K562 (cell line): ENCODE measurements at regions of chr1 and their contacts with region 1.

Region 1: GRCh38 chr1:204670152-204670927 is 15.2 kb downstream of the LRRN2 start:
- DNase-seq: peak; percentile 61 to 76 (median 71)
- ATAC-seq: no peak
- H3K4me3 ChIP-seq: no peak overlapping the region
- H3K27ac ChIP-seq: no peak overlapping the region; the same call in 2 of the 3 replicates
- H3K4me1 ChIP-seq: peaks cover 34 to 42% of the 10 kb centered on the region in 2 experiments
- H3K27me3 ChIP-seq: peaks cover 0 to 12% of the 10 kb centered on the region in 2 experiments; a peak in 3 of 5 replicates
- CTCF ChIP-seq: no peak
- EP300 ChIP-seq: no peak
- POLR2A ChIP-seq: no peak
- RAD21 ChIP-seq: no peak

Region 2: GRCh38 chr1:204565617-204566582 is 104.4 kb before region 1 on chr1:
- CTCF ChIA-PET with region 1: no interaction called
- POLR2A ChIA-PET with region 1: interaction called, 3 read pairs
- in situ Hi-C with region 1: no loop called
- intact Hi-C with region 1: loop called (anchors 5 kb)
- DNase-seq: peak; percentile 84 to 92 (median 90)
- ATAC-seq: peak; percentile 92
- H3K4me3 ChIP-seq: no peak overlapping the region
- H3K27ac ChIP-seq: peak overlapping the region; percentile 4; the same call in 1 of the 3 replicates
- H3K4me1 ChIP-seq: peaks cover 12 to 16% of the 10 kb centered on the region in 2 experiments; a peak in 4 of 5 replicates
- H3K27me3 ChIP-seq: no peaks in the 10 kb centered on the region
- CTCF ChIP-seq: peak; percentile 81 to 91 (median 90)
- EP300 ChIP-seq: peak; percentile 95
- POLR2A ChIP-seq: no peak
- RAD21 ChIP-seq: peak; percentile 94 to 98

Region 3: DNA sequence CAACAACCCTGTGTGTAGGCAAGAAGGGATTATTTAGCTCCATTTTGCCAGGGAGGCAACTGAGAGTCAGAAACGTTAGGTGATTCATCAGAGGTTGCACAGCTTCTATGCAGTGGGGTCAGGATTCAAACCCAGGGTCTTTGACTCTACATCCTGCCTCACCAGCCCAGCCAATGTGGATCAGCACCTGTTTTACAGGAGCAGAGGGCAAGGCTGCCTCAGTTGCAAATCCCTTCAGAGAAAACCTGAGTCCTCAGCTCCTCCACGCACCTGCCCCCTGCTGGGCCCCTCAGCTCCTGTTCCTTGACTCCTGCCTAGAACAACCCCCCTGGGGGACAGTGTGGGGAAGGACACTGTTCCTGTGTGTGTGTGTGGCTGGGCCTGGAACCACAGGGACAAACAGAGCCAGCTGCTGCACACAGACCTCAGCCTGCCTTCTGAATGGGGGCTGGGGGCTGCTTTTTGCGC is 46.4 kb before region 1 on chr1:
- CTCF ChIA-PET with region 1: no interaction called
- POLR2A ChIA-PET with region 1: interaction called, 3 read pairs
- in situ Hi-C with region 1: no loop called
- intact Hi-C with region 1: loop called (anchors 5 kb)
- DNase-seq: peak; percentile 71 to 88 (median 76)
- ATAC-seq: peak; percentile 89
- H3K4me3 ChIP-seq: no peak overlapping the region
- H3K27ac ChIP-seq: no peak overlapping the region
- H3K4me1 ChIP-seq: peaks cover 37 to 40% of the 10 kb centered on the region in 2 experiments
- H3K27me3 ChIP-seq: peaks cover 10 to 25% of the 10 kb centered on the region in 2 experiments
- CTCF ChIP-seq: peak; percentile 85 to 99 (median 87)
- EP300 ChIP-seq: no peak
- POLR2A ChIP-seq: no peak
- RAD21 ChIP-seq: peak in 1 of 2 experiments; percentile 45; a peak in 2 of 4 replicates

Region 4: GRCh38 chr1:204685236-204686006 is 15.1 kb after region 1 on chr1 and contains the start of gene LRRN2:
- CTCF ChIA-PET with region 1: no interaction called
- POLR2A ChIA-PET with region 1: interaction called, 23 read pairs
- in situ Hi-C with region 1: no loop called
- intact Hi-C with region 1: no loop called
- DNase-seq: no peak
- ATAC-seq: no peak
- H3K4me3 ChIP-seq: no peak within 1 kb of the TSS
- H3K27ac ChIP-seq: no peak within 1 kb of the TSS
- H3K4me1 ChIP-seq: peaks cover 8 to 16% of the 10 kb centered on the region in 2 experiments; a peak in 4 of 5 replicates
- H3K27me3 ChIP-seq: no peaks in the 10 kb centered on the region
- CTCF ChIP-seq: no peak
- EP300 ChIP-seq: no peak
- POLR2A ChIP-seq: no peak
- RAD21 ChIP-seq: no peak
- polyA plus RNA-seq, gene LRRN2: not detected

Region 5: DNA sequence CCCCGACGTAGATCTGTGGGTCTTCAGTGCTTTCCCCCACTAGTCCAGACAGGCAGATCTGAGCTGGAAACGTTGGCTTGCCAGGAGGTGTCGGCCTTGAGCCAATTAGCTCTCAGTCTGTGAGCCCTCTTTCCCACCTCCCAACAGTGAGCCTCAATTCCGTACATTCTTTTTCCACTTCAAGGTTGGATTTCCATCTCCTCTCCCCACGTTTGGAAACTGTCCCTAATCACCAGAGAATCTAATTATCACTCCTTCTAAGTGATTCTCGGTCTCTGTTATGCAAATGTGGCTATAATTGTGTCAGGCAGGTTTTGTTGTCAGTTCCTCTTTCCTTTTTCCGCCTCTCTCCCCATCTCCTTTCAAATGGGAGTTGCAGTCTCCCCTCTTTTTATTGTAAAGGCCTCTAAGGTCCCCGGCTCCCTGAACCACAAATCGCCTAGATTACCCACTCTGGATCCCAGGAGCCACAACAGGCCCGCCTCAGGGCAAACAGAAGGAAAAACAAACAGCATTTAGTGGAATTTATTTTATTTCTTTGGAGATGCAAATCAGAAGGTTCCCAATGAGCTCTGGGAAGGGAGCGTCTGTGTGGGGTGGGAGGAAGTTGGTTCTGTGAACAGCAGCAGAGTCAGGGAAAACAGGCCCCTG is 44.6 kb after region 1 on chr1:
- CTCF ChIA-PET with region 1: no interaction called
- POLR2A ChIA-PET with region 1: interaction called, 3 read pairs
- in situ Hi-C with region 1: no loop called
- intact Hi-C with region 1: loop called (anchors 1 kb)
- DNase-seq: peak in 1 of 4 experiments; percentile 38
- ATAC-seq: peak; percentile 39; the same call in 2 of the 3 replicates
- H3K4me3 ChIP-seq: no peak overlapping the region
- H3K27ac ChIP-seq: peak overlapping the region; percentile 2; the same call in 1 of the 3 replicates
- H3K4me1 ChIP-seq: peaks cover 16 to 45% of the 10 kb centered on the region in 2 experiments
- H3K27me3 ChIP-seq: no peaks in the 10 kb centered on the region
- CTCF ChIP-seq: peak; percentile 29 to 53 (median 51); a peak in 4 of 6 replicates
- EP300 ChIP-seq: no peak
- POLR2A ChIP-seq: no peak
- RAD21 ChIP-seq: peak; percentile 25 to 51; a peak in 2 of 4 replicates

Region 6: GRCh38 chr1:204726478-204726877 is 56.1 kb after region 1 on chr1:
- CTCF ChIA-PET with region 1: no interaction called
- POLR2A ChIA-PET with region 1: no interaction called
- in situ Hi-C with region 1: no loop called
- intact Hi-C with region 1: no loop called
- DNase-seq: no peak
- ATAC-seq: no peak
- H3K4me3 ChIP-seq: no peak overlapping the region
- H3K27ac ChIP-seq: no peak overlapping the region
- H3K4me1 ChIP-seq: peaks cover 0 to 2% of the 10 kb centered on the region in 2 experiments; a peak in 3 of 5 replicates
- H3K27me3 ChIP-seq: peaks cover 7 to 24% of the 10 kb centered on the region in 2 experiments; a peak in 3 of 5 replicates
- CTCF ChIP-seq: no peak
- EP300 ChIP-seq: no peak
- POLR2A ChIP-seq: no peak
- RAD21 ChIP-seq: no peak

Region 7: GRCh38 chr1:204751894-204752687 is 81.8 kb after region 1 on chr1:
- CTCF ChIA-PET with region 1: no interaction called
- POLR2A ChIA-PET with region 1: interaction called, 7 read pairs
- in situ Hi-C with region 1: no loop called
- intact Hi-C with region 1: loop called (anchors 5 kb)
- DNase-seq: peak; percentile 52 to 76 (median 70)
- ATAC-seq: peak; percentile 99
- H3K4me3 ChIP-seq: no peak overlapping the region
- H3K27ac ChIP-seq: no peak overlapping the region
- H3K4me1 ChIP-seq: peaks cover 6 to 9% of the 10 kb centered on the region in 2 experiments; a peak in 4 of 5 replicates
- H3K27me3 ChIP-seq: peaks cover 0 to 6% of the 10 kb centered on the region in 2 experiments; a peak in 1 of 5 replicates
- CTCF ChIP-seq: peak; percentile 62 to 71 (median 66)
- EP300 ChIP-seq: no peak
- POLR2A ChIP-seq: no peak
- RAD21 ChIP-seq: peak; percentile 29 to 37